Posterior vena cava (tissue), 2 donors: ENCODE measurements at regions of chr2 and their contacts with region 1.

Region 1: DNA sequence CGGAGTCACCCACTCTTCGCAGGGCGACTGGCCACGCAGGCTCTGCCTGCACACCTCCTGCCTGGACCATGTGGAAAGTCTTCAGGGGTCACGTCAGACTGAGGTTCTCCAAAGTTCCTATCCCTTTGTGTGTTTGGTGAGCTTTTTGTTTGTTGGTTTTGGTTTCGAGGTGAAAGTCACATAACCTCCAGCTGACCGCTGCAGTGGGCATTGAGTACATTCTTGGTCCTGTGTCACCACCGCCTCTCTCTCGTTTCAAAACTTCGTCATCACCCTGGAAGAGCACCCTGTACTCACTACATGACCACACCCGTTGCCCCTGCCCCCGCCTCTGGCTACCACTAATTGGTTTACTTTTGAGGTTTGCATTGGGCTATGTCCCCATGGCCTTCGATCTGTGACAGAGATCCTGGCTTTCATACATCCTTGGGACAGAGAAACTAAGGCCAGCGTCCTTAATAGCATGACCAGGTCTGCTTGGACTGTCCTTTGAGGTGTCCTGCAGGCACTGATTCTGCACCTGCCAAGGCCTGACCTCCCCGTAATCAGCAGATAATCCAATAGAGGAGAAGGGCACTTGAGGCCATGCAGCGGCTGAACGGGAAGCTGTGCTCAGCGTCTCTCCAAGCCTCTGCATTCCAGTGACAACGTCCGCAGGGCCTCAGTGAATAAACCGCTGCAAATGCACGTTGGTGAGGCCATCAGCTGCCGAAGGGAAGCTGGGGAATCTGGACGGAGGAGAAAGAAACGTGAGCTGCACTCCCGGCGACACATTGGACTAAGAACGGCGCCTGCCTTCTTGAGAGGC is 46.8 kb downstream of the SH3BP4 start:
- DNase-seq: no peak

Region 2: DNA sequence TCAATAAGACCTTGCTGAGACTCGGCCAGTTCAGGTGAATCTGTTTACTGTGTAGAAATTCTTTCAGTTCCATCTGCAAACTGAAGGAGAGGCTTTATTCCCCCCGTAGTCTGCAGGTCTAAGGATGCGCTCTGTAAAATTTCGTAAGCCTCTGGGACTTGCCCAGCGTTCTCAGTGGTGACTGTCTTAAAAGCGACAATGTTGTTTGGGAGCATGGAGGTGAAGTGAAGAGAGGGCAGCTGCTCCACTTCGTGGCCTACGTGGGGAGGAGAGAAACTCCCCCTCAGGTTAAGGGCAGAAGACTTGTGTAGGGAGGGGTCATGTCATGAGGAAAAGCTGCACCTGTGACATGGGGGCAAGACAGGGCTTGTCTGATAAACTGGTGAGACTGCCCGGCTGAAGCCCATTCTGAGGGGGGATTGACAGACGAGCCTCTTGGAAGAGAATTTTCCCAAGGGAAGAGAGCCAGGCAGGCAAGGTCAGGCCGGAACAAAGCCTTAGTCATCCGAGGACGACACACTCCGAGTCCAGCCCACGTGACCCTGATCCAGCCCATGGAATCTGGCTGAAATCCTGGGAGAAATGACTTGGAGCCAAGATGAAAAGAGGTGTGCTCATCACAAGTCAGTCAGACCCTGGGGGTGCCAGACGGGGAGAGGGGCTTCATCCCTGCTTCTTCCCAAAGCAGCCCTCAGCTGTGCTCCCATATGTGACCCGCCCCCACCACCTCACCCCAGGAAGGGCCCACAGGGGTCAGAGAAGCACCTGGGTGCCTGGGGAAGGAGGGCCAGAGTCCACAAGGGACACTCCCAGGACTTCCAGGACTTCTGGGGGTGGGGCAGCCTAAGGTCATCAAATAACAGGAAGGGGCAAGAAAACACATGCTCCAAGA is 135.3 kb before region 1 on chr2:
- intact Hi-C with region 1: no loop called
- DNase-seq: no peak

Region 3: DNA sequence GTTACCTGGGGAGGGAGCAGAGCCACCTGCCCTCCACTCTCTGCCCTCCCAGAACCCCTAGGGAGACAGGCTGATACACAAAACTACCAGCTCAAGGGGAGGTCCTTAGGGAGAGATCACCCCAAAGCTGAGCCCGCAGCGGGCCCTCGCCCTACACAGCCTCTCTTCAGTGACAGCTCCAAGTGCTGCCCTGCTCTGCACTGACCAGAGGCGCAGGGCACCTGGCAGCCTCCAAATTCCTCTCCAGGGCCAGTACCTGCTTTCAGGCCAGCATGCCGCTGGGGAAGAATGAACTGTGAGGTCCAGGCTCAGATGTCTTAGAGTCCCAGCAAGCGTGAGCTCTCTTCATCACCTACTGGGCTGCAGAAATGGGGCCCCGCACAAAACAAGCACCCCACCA is 58.1 kb before region 1 on chr2:
- intact Hi-C with region 1: loop called in 1 of 2 experiments (anchors 2 kb)
- DNase-seq: no peak